ENCODE measurements at regions of chr5 and their contacts with region 1.

Region 1: DNA sequence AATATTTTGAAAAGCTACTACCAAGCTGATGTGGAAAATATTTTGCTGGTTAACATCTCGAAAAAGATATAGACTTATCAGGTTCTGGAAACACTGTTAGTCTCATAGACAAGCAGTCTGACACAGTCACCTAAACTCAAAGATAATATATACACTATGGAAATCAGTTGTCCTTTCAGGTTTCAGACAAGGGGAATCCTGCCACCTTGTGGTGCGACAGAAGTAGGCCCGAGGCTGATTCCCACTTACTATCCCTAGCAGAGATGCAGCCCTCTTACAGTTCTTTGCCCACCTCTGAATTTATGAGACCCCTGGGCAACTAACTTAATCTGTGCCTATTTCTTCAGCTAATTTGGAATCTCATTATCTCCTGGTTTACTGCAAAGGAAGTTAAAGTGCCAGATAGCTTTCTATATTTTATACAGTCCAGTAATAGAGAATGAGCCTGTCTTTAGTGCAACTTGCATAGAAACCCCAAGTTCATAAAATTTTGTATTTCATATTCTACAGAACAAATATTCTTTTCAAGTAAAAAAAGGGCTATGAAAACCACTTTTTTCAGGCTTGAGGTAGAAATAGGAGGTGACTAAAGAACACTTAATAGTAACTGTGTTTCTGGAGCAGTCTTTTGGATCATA is 16.9 kb downstream of the RAD1 start:
- DNase-seq: peak; percentile 56 to 92 (median 81)

Region 2: DNA sequence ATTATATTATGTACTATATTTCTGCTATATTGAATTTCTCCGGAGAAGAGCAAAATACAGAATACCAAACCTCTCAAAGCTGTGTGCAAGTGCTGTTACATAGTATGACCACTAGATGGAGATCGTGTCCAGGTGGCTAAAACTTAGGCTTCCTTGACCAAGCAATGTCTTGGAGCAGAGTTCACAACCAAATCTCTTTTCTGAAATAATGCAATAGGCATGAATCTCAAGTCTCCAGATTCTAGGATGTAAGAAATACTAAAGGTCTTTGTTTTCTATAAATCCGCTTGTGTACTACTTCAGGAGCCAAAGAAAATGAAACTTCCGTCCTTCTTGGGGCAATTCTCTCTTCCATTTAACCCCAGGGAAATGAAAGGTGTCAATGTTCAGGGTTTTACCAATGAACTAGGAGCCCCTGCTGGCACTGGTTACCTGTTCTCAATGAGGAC is 423.8 kb before region 1 on chr5:
- intact Hi-C with region 1: loop called (anchors 5 kb)
- DNase-seq: peak in 20 of 42 donors; percentile 27 to 81 (median 52)

Region 3: DNA sequence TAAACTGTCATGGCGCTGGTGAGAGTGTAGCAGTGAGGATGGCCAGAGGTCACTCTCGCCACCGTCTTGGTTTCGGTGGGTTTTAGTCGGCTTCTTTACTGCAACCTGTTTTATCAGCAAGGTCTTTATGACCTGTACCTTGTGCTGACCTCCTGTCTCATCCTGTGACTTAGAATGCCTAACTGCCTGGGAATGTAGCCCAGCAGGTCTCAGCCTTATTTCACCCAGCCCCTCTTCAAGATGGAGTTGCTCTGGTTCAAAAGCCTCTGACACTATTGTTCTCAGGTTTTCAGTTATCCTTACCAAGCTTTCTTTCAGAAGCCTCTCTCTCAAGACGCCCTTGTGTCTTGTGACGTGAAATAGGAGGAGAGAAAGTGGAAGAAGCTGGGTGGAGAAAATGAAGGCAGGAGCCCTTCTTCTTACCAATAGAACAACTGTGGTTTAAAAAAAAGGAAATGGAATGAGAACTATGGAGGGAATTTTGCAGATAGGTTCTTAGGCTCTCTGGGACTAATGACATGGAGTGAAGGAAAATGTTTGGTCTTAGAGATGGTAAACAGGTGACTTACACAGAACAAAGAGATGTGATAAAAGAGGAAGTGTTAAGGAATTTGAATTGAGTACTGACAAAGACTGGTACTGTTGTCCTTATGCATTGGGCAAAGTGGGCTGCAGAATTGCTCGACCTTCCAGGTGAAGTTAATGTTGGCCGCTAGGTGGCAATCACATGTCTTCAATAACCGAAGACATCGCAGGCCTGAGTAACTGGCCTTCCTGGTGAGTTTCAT is 375.6 kb before region 1 on chr5:
- intact Hi-C with region 1: loop called (anchors 10 kb)
- DNase-seq: peak; percentile 25 to 93 (median 79)

Region 4: DNA sequence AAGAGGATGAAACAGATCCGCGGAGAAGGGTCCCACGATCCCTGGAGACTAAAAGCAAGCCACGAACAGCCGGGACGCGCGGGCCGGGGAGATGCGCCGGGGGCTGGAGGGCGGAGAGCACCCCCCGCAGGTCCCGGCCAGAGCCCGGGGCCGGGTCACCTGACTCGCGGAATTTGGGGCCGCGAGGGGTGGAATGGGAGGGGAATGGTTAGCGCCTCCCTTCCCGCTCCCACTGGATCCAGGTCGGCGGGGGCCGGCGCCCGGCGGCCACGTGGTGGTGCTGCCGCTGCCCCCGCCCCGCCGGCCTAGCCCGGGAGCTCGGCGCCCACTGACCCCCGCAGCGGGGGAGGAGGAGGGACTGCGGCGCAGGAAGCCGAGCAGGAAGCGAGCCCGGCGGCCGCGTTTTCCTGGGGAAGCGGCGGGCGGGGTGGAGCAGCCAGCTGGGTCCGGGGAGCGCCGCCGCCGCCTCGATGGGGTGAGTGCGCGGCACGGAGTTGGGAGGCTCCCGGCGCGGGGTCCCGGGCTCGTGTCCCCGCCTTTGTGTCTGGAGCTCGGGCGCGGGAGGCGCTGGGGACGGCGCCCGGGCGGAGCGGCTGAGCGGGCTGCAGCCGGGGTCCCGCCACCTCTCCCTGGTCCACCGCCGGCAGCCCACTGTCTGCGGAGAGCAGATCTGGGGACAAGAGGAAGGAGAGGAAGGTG is 242.2 kb before region 1 on chr5 and contains the start of gene RAI14:
- intact Hi-C with region 1: loop called (anchors 10 kb)
- DNase-seq: peak; percentile 20 to 91 (median 78)

Region 5: DNA sequence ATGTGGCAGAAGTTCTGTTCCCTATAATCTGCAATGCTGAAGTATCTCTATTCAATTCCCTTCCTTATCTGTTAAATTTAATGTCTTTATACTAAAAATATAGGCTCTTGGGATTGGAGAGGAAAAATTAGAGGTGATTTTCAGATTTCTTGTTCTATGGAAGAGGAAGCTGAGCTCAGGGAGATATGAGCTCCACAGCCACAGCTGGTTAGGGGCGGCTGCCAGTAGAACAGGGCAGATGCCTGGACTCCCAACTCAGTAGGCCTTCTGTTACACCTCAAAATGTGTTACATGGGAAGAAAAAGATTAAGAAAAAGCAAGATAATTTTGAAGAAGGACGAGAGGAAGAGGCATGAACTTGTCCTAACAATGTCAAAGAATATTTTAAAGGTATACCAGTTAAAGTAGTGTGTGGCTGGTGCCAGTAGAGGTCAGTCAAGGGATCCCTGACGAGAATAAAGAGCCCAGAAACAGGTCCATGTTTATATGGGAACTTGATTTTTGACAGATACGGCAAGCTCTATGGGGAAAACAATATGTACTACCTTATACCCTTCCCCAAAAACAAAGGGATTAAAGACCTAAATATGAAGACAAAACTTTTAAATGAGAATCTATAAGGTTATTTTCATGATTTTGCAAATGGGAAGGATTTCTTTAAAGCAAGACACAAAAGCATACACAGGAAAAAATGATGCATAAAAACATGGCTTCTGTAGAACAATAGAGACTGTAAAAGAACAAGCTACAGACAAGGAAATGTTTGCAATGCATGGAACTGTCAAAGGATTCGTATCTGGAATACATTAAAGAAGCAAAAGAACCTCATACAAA is 59.7 kb after region 1 on chr5:
- intact Hi-C with region 1: no loop called
- DNase-seq: peak in 11 of 42 donors; percentile 5 to 26 (median 19)

Region 6: DNA sequence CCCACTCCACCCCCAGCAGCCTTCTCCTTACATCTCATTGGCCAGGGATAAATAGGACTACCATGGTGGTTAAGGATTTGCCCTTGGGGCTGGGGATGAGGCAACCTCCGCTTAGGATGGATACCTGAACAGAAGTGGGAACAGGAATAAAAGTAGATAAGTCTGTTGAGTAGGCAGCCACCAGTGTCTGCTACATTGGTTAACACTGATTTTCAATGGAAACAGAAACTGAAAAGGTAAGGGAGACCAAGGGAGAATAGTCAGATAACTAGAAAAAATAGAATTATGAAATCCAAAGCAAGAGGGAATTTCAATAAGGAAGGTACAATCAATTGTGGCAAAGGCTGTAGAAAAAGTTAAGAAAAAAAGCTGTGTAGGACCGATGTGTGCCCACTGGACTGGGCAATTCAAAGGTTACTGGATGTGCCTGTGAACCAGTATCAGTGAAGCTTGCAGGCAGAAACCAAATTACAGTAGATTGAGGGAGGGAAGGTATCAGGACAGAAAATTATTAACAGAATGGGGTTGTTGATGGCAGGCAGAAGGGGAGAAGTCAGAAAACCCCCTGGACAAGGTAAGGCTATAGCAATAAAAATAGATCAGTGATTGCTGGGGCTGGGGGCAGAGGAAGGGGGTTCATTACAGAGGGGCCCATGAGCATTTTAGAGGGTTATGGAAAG is 79.7 kb after region 1 on chr5:
- intact Hi-C with region 1: no loop called
- DNase-seq: no peak

Measured in head of caudate nucleus (tissue), 42 donors.